Breast epithelium (tissue), 4 donors: ENCODE measurements at regions of chr6 and their contacts with region 1.

Region 1: GRCh38 chr6:163092876-163093275 is 321.6 kb upstream of the QKI start:
- DNase-seq: no peak
- H3K4me3 ChIP-seq: no peak overlapping the region
- H3K27ac ChIP-seq: no peak overlapping the region
- H3K4me1 ChIP-seq: no peaks in the 10 kb centered on the region
- H3K27me3 ChIP-seq: no peaks in the 10 kb centered on the region
- CTCF ChIP-seq: no peak
- POLR2A ChIP-seq: no peak

Region 2: GRCh38 chr6:161658211-161658610 is 1434.7 kb before region 1 on chr6:
- intact Hi-C with region 1: loop called (anchors 5 kb)
- DNase-seq: no peak
- H3K4me3 ChIP-seq: no peak overlapping the region
- H3K27ac ChIP-seq: no peak overlapping the region
- H3K4me1 ChIP-seq: no peaks in the 10 kb centered on the region
- H3K27me3 ChIP-seq: no peaks in the 10 kb centered on the region
- CTCF ChIP-seq: no peak
- POLR2A ChIP-seq: no peak